ENCODE measurements at regions of chr11 and their contacts with region 1.

Region 1: GRCh38 chr11:125164422-125165110 is at the start of gene PKNOX2:
- DNase-seq: peak; percentile 92
- total RNA-seq, gene PKNOX2: 8.2 to 8.3 TPM

Region 2: GRCh38 chr11:124976994-124977393 is 187.6 kb before region 1 on chr11:
- intact Hi-C with region 1: no loop called
- DNase-seq: no peak

Region 3: GRCh38 chr11:125287491-125288210 is 123.1 kb after region 1 on chr11:
- intact Hi-C with region 1: loop called in 1 of 2 experiments (anchors 5 kb)
- DNase-seq: peak; percentile 86

Region 4: GRCh38 chr11:125404776-125405435 is 240.3 kb after region 1 on chr11:
- intact Hi-C with region 1: loop called in 1 of 2 experiments (anchors 10 kb)
- DNase-seq: peak; percentile 90